ENCODE measurements at regions of chr1 and their contacts with region 1.

Region 1: DNA sequence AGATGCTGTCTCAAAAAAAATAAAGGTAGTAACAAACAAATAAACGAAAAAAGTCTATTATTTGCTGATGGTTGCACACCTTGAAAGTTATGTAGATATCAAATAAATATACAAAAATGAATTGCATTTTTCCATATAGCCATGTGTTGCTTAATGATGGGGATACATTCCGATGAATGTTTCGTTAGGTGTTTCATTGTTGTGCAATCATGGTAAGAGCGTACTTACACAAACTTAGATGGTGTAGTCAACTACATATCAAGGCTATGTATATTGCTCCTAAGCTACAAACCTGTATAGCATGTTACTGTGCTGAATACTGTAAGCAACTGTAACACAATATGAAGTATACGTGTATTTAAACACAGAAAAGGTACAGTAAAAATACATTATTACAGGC is 34.4 kb downstream of the AHCTF1 start:
- DNase-seq: no peak
- ATAC-seq: no peak
- H3K4me3 ChIP-seq: no peak overlapping the region
- H3K27ac ChIP-seq: no peak overlapping the region
- H3K4me1 ChIP-seq: no peaks in the 10 kb centered on the region
- H3K27me3 ChIP-seq: no peaks in the 10 kb centered on the region
- CTCF ChIP-seq: no peak

Region 2: GRCh38 chr1:246860401-246860800 is 36.9 kb before region 1 on chr1:
- intact Hi-C with region 1: loop called in 2 of 10 experiments (anchors 5 kb)
- DNase-seq: no peak
- ATAC-seq: no peak
- H3K4me3 ChIP-seq: no peak overlapping the region
- H3K27ac ChIP-seq: no peak overlapping the region
- H3K4me1 ChIP-seq: no peaks in the 10 kb centered on the region
- H3K27me3 ChIP-seq: no peaks in the 10 kb centered on the region
- CTCF ChIP-seq: no peak

Measured in heart right ventricle (tissue), 16 donors.